ENCODE measurements at regions of chr19 and their contacts with region 1.

Region 1: DNA sequence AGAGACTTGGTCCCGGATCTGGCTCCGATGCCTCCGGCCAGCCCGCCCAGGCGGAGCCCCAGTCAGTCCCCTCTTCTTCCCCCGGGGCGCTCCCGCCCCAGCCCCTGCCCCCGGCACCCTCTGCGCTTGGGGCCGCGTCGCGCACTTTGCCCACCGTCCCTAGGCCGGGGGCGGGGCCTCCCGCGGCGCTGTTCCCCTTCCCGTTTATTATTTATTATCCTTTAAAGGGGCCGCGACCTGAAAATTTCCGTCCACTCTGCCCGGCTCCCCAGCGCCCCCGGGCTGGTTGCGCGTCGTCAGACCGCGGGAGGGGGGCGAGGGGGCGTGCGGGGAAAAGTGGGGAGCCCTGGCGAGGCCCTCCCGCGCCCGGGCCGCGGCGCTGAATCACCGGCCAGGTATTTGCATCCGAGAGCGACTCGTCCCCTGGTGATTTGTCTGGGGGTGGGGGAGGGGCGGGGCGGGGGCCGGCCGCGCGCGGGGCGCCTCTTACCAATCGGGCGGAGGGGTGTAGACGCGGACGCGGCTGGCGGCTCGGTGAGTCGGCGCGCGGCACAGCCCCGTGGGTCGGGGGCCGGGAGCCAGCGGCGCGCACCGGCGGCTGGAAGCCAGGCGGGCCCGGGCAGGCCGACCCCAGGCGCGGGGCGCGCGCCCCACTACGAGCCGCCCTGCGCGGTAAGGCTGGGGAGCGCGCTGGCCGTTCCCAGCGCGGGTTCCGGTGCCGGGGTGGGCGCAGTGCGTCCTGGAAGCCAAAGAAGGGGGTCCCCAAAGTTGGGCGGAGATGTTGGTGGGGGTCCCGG is at the start of gene ARID3A:
- DNase-seq: peak; percentile 80 to 90
- H3K4me3 ChIP-seq: peak within 1 kb of the TSS; percentile 76
- H3K4me1 ChIP-seq: peaks cover 11% of the 10 kb centered on the region
- H3K27me3 ChIP-seq: no peaks in the 10 kb centered on the region

Region 2: DNA sequence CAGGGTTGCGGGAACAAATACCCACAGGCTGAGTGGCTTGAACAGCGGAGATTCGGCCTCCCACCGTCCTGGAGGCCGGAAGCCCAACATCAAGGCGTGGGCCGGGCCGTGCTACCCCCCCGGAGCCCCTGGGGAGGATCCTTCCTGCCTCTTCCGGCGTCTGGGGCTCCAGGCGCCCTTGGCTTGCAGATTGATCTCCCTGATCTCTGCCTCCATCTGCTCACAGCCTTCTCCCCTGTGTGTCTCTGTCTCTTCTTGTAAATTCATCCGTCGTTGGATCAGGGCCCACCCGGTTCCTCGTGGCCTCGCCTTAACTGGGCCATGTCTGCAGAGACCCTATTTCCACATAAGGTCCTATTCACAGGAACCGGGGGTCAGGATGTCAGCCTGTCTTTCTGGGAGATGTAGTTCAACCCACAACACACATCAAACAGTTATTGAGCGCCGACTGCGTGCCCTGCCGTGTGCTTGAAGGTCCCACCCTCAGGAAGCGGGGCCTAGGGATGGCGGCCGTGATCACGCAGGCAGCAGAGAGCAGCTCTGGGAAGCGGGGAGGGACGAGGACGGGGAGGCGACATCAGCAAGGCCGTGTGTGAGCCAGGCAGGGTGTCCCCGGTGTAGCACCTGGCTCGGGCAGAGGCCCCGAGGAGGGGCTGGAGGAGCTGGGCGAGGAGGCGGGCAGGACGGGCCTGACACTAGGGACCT is 314.8 kb before region 1 on chr19:
- in situ Hi-C with region 1: no loop called
- DNase-seq: no peak
- H3K4me3 ChIP-seq: no peak overlapping the region
- H3K4me1 ChIP-seq: no peaks in the 10 kb centered on the region
- H3K27me3 ChIP-seq: no peaks in the 10 kb centered on the region

Region 3: GRCh38 chr19:989381-990119 is 63.8 kb after region 1 on chr19:
- in situ Hi-C with region 1: loop called (anchors 5 kb)
- DNase-seq: no peak
- H3K4me3 ChIP-seq: no peak overlapping the region
- H3K4me1 ChIP-seq: no peaks in the 10 kb centered on the region
- H3K27me3 ChIP-seq: no peaks in the 10 kb centered on the region

Region 4: GRCh38 chr19:1249298-1249989 is 323.7 kb after region 1 on chr19:
- in situ Hi-C with region 1: loop called (anchors 10 kb)
- DNase-seq: peak; percentile 92 to 93
- H3K4me3 ChIP-seq: peak overlapping the region; percentile 83
- H3K4me1 ChIP-seq: peaks cover 8% of the 10 kb centered on the region
- H3K27me3 ChIP-seq: no peaks in the 10 kb centered on the region

Measured in HAP-1 (cell line).